ENCODE measurements at regions of chr17 and their contacts with region 1.

Region 1: GRCh38 chr17:68497885-68498319 is 14.3 kb upstream of the PRKAR1A start:
- DNase-seq: no peak
- H3K4me3 ChIP-seq: no peak overlapping the region
- H3K4me3 Mint-ChIP-seq: no peak overlapping the region
- H3K27ac Mint-ChIP-seq: no peak overlapping the region
- H3K4me1 ChIP-seq: no peaks in the 10 kb centered on the region
- H3K4me1 Mint-ChIP-seq: no peaks in the 10 kb centered on the region
- H3K27me3 ChIP-seq: peaks cover 1% of the 10 kb centered on the region; the same call in 1 of the 2 replicates
- H3K27me3 Mint-ChIP-seq: peaks cover 9% of the 10 kb centered on the region
- CTCF ChIP-seq: no peak

Region 2: GRCh38 chr17:68457539-68458259 is 40.2 kb before region 1 on chr17:
- CTCF ChIA-PET with region 1: no interaction called
- POLR2A ChIA-PET with region 1: no interaction called
- intact Hi-C with region 1: no loop called
- DNase-seq: peak; percentile 99 to 100
- H3K4me3 ChIP-seq: peak overlapping the region; percentile 59
- H3K4me3 Mint-ChIP-seq: peak overlapping the region; percentile 95
- H3K27ac Mint-ChIP-seq: peak overlapping the region; percentile 84
- H3K4me1 ChIP-seq: peaks cover 16% of the 10 kb centered on the region; the same call in 1 of the 2 replicates
- H3K4me1 Mint-ChIP-seq: peaks cover 13% of the 10 kb centered on the region
- H3K27me3 ChIP-seq: no peaks in the 10 kb centered on the region
- H3K27me3 Mint-ChIP-seq: peaks cover 3% of the 10 kb centered on the region
- CTCF ChIP-seq: no peak

Region 3: GRCh38 chr17:68600067-68600930 is 102.4 kb after region 1 on chr17:
- CTCF ChIA-PET with region 1: no interaction called
- POLR2A ChIA-PET with region 1: no interaction called
- intact Hi-C with region 1: no loop called
- DNase-seq: peak; percentile 49 to 66
- H3K4me3 ChIP-seq: peak overlapping the region; percentile 45
- H3K4me3 Mint-ChIP-seq: peak overlapping the region; percentile 61
- H3K27ac Mint-ChIP-seq: peak overlapping the region; percentile 63
- H3K4me1 ChIP-seq: peaks cover 15% of the 10 kb centered on the region
- H3K4me1 Mint-ChIP-seq: peaks cover 15% of the 10 kb centered on the region
- H3K27me3 ChIP-seq: no peaks in the 10 kb centered on the region
- H3K27me3 Mint-ChIP-seq: peaks cover 9% of the 10 kb centered on the region
- CTCF ChIP-seq: peak; percentile 27 to 61

Region 4: DNA sequence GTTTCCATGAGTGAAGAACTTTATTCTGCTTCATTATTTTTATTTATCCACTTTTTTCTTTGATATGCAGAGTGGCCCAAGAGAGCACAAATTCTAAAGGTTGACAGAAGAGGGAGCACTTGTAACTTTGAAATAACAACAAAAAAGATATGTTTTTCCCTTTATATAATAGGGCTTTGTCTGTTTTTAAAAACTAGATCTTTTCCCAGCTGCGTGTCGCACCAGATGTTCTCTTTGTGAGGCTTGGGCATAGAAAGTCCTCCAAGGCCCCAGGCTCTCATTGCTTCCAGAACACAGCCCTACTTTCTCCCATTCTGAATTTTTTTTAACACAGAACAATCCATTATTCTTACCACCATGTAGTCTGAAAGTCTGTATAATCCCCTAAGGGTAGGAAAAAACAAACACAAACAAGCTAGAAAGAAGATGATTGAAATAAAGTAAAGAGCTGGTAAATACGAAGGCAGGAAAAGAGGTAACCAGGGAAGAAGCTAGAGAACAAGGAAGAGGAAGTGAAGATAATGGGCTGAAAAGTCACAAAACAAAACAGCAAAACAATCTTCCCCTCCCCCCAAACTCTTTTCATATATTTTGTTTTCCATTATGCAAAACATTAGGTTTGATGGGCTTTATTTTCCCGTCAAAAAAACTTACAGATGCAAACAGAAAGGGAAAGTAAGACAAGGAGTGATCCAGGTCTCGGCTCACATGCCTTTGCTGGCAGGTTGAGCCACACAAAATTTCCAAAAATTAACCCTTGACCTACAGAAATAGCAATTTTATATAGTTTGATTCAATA is 296.9 kb after region 1 on chr17:
- CTCF ChIA-PET with region 1: no interaction called
- POLR2A ChIA-PET with region 1: no interaction called
- intact Hi-C with region 1: no loop called
- DNase-seq: no peak
- H3K4me3 ChIP-seq: no peak overlapping the region
- H3K4me3 Mint-ChIP-seq: no peak overlapping the region
- H3K27ac Mint-ChIP-seq: no peak overlapping the region
- H3K4me1 ChIP-seq: peaks cover 17% of the 10 kb centered on the region
- H3K4me1 Mint-ChIP-seq: peaks cover 9% of the 10 kb centered on the region
- H3K27me3 ChIP-seq: no peaks in the 10 kb centered on the region
- H3K27me3 Mint-ChIP-seq: no peaks in the 10 kb centered on the region
- CTCF ChIP-seq: no peak

Region 5: GRCh38 chr17:69876757-69877156 is 1378.9 kb after region 1 on chr17:
- CTCF ChIA-PET with region 1: no interaction called
- POLR2A ChIA-PET with region 1: interaction called, 12 read pairs
- intact Hi-C with region 1: no loop called
- DNase-seq: no peak
- H3K4me3 ChIP-seq: no peak overlapping the region
- H3K4me3 Mint-ChIP-seq: no peak overlapping the region
- H3K27ac Mint-ChIP-seq: no peak overlapping the region
- H3K4me1 ChIP-seq: no peaks in the 10 kb centered on the region
- H3K4me1 Mint-ChIP-seq: no peaks in the 10 kb centered on the region
- H3K27me3 ChIP-seq: no peaks in the 10 kb centered on the region
- H3K27me3 Mint-ChIP-seq: no peaks in the 10 kb centered on the region
- CTCF ChIP-seq: no peak

Measured in Caco-2 (cell line).